Natural killer cell (primary cell): ENCODE measurements at regions of chr2 and their contacts with region 1.

Region 1: DNA sequence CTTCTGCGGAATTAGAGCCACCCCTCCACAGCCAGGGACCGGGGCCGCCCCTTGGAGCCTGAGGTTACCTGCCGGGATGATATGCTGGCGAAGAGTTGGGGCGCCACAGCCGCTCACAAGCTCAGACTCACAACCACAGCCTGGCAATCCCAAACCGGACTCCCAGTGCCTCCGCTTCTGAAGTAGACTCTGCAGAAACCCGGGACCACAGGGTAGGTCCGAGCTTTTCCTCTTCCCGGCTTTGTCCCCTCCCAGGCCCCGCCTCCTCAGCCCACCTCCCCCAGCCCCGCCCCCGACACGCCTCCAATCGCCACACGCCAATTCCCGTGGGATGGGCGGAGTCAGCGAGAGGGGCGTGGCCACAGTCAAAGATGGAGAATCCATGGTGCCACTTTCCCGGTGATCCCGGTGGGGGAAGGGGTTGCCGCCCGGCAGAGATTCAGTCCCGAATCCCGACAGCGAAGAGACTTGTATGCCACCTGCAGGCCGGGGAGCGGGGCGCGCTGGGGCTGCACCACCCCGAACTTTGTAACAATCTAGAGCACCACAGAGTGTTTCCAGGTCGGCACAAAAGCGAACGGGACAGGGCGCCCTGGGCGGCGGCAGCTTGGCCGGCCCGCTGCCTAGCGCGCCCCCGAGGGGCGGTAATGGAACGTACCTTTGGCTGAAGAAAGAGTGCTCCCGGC is at the start of gene IDH1:
- DNase-seq: peak; percentile 95
- ATAC-seq: peak; percentile 90 to 94 (median 91)
- H3K4me3 ChIP-seq: peak within 1 kb of the TSS; percentile 96
- H3K4me3 Mint-ChIP-seq: peak within 1 kb of the TSS; percentile 98
- H3K27ac ChIP-seq: peak within 1 kb of the TSS; percentile 39
- H3K27ac Mint-ChIP-seq: peak within 1 kb of the TSS; percentile 66 to 86
- H3K4me1 ChIP-seq: peaks cover 20% of the 10 kb centered on the region
- H3K4me1 Mint-ChIP-seq: peaks cover 30 to 32% of the 10 kb centered on the region in 2 donors
- H3K27me3 ChIP-seq: no peaks in the 10 kb centered on the region
- H3K27me3 Mint-ChIP-seq: peaks cover 6 to 7% of the 10 kb centered on the region in 2 donors
- CTCF ChIP-seq: no peak
- total RNA-seq, gene IDH1: 6.8 to 15.2 (median 12.2) TPM

Region 2: GRCh38 chr2:208175069-208175839 is 79.8 kb before region 1 on chr2:
- intact Hi-C with region 1: loop called (anchors 1 kb)
- DNase-seq: peak; percentile 29 to 77
- ATAC-seq: peak; percentile 88 to 99 (median 99)
- H3K4me3 ChIP-seq: no peak overlapping the region
- H3K4me3 Mint-ChIP-seq: no peak overlapping the region
- H3K27ac ChIP-seq: no peak overlapping the region
- H3K27ac Mint-ChIP-seq: no peak overlapping the region
- H3K4me1 ChIP-seq: no peaks in the 10 kb centered on the region
- H3K4me1 Mint-ChIP-seq: peaks cover 0 to 10% of the 10 kb centered on the region in 2 donors
- H3K27me3 ChIP-seq: no peaks in the 10 kb centered on the region
- H3K27me3 Mint-ChIP-seq: peaks cover 8 to 14% of the 10 kb centered on the region in 2 donors
- CTCF ChIP-seq: peak; percentile 89

Region 3: GRCh38 chr2:208265801-208266552 is 11.0 kb after region 1 on chr2 and contains the start of gene PIKFYVE:
- intact Hi-C with region 1: loop called (anchors 1 kb)
- DNase-seq: peak; percentile 81 to 93
- ATAC-seq: peak; percentile 85 to 94 (median 89)
- H3K4me3 ChIP-seq: peak within 1 kb of the TSS; percentile 60
- H3K4me3 Mint-ChIP-seq: peak within 1 kb of the TSS; percentile 93
- H3K27ac ChIP-seq: peak within 1 kb of the TSS; percentile 75
- H3K27ac Mint-ChIP-seq: peak within 1 kb of the TSS; percentile 94 to 96
- H3K4me1 ChIP-seq: peaks cover 29% of the 10 kb centered on the region
- H3K4me1 Mint-ChIP-seq: peaks cover 30 to 48% of the 10 kb centered on the region in 2 donors
- H3K27me3 ChIP-seq: no peaks in the 10 kb centered on the region
- H3K27me3 Mint-ChIP-seq: no peaks in the 10 kb centered on the region
- CTCF ChIP-seq: no peak
- total RNA-seq, gene PIKFYVE: 38.9 to 48.7 (median 39.2) TPM

Region 4: DNA sequence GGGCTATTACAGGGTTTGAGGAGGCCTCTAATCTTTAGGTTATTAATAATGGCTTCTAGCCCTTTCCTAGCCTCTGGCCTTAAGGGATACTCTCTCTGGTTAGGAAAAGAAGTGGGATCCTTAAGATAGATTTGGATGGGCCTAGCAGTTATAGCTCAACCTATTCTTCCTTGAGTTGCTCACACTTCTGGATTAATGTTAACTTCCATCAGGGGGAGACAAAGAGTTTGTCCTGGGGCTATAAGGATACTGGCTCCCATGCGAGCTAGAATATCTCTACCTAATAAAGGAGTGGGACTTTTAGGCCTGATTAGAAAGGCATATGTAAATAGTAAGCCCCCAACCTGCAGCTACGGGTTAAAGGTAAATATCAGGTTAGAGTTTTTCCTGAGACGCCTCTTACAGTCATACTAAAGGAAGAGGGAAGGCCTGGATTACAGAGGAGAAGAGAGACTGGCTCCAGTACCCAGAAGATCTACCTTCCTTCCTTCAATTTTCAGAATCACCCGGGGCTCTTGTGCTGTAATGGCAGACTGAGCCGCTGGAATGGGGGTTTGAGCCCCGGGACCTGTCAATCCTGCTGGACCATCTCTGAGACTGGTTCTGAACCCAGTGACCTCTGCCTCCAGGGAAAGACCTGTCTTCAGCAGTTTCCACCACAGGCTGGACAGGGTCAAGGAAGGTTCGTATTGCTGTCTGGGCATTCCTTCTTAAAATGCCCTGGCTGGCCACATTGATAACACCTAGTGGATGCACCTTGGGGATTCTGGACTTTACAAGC is 137.5 kb after region 1 on chr2:
- intact Hi-C with region 1: no loop called
- DNase-seq: no peak
- ATAC-seq: no peak
- H3K4me3 ChIP-seq: no peak overlapping the region
- H3K4me3 Mint-ChIP-seq: no peak overlapping the region
- H3K27ac ChIP-seq: no peak overlapping the region
- H3K27ac Mint-ChIP-seq: no peak overlapping the region
- H3K4me1 ChIP-seq: no peaks in the 10 kb centered on the region
- H3K4me1 Mint-ChIP-seq: peaks cover 0 to 4% of the 10 kb centered on the region in 2 donors
- H3K27me3 ChIP-seq: no peaks in the 10 kb centered on the region
- H3K27me3 Mint-ChIP-seq: peaks cover 0 to 3% of the 10 kb centered on the region in 2 donors
- CTCF ChIP-seq: no peak